PC-3 (cell line): ENCODE measurements at regions of chr12 and their contacts with region 1.

Region 1: GRCh38 chr12:51832354-51833107 is 16.0 kb downstream of the FIGNL2 start:
- DNase-seq: no peak
- ATAC-seq: no peak
- H3K4me3 ChIP-seq: no peak overlapping the region
- H3K27ac ChIP-seq: no peak overlapping the region
- H3K4me1 ChIP-seq: peaks cover 18% of the 10 kb centered on the region
- H3K27me3 ChIP-seq: 0 out of 2 replicates have a peak, but pooled peaks cover 4% of the 10 kb centered on the region
- CTCF ChIP-seq: no peak

Region 2: DNA sequence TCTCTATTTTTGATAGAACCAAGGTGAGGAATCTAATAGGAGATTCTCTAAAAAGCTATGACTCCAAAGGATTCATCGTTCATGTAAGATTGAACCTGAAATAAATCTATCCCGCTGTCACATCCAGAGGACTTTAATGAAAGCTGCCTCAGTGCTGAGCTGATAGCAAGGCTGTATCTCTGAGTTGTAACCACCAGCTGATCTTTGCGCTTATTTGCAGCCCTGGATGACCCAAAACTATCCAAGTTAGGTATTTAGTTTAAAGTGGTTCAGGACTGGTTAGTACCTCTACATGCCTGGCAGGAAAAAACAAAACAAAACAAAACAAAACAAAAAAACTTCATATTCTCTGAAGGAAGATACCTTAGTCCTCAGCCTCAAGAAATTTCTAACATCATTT is 46.6 kb after region 1 on chr12:
- CTCF ChIA-PET with region 1: interaction called, 5 read pairs
- POLR2A ChIA-PET with region 1: no interaction called
- intact Hi-C with region 1: loop called (anchors 5 kb)
- DNase-seq: no peak
- ATAC-seq: no peak
- H3K4me3 ChIP-seq: no peak overlapping the region
- H3K27ac ChIP-seq: no peak overlapping the region
- H3K4me1 ChIP-seq: no peaks in the 10 kb centered on the region
- H3K27me3 ChIP-seq: no peaks in the 10 kb centered on the region
- CTCF ChIP-seq: no peak